GM12878 (cell line): ENCODE measurements at regions of chr2 and their contacts with region 1.

Region 1: DNA sequence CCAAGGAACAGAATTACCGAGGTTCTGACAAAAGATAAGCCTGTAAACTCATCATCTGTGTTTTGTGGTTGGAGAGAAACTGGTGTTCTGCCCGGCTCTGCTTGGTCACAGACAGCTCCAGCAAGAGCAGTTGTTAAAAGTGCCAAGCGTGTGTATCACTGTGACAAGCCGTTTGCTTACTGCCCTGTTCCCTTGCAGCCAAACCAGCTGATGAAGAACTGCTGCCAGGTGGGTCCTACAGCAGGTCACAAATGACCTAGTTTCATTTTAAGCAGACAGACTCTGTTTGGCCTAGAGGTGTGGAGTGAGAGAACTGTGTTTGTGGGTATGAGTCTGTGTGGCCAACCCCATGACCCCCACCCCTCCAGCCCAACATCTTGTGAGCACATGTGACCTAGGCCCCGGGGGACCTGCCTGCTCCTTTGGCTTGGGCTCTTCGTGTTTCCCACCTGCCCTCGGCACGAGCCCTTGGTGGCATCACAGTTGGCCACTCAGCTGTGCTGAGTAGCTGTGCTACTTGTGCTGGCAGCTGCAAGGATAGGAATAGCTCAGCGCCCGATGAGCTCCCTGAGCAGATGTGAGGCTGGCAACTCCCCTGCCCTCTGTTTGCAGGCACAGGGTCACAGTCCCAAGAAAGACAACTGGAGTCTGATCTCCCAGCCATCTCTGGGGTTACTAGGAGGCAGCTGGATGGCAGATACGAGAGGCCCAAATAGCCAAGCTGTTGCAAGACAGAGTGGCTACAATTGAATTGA is 9.7 kb downstream of the OXER1 start:
- DNase-seq: peak; percentile 76
- ATAC-seq: peak; percentile 80
- H3K4me3 ChIP-seq: no peak overlapping the region
- H3K27ac ChIP-seq: peak overlapping the region; percentile 24
- H3K4me1 ChIP-seq: peaks cover 52% of the 10 kb centered on the region
- H3K27me3 ChIP-seq: no peaks in the 10 kb centered on the region
- CTCF ChIP-seq: no peak
- EP300 ChIP-seq: peak; percentile 27 to 63; a peak in 1 of 4 replicates
- POLR2A ChIP-seq: no peak
- RAD21 ChIP-seq: no peak

Region 2: GRCh38 chr2:42494355-42495233 is 259.6 kb before region 1 on chr2:
- CTCF ChIA-PET with region 1: no interaction called
- POLR2A ChIA-PET with region 1: interaction called, 7 read pairs
- RAD21 ChIA-PET with region 1: no interaction called
- SMC1A ChIA-PET with region 1: no interaction called
- in situ Hi-C with region 1: no loop called
- intact Hi-C with region 1: loop called (anchors 10 kb)
- DNase-seq: peak; percentile 35
- ATAC-seq: peak; percentile 90
- H3K4me3 ChIP-seq: peak overlapping the region; percentile 76
- H3K27ac ChIP-seq: no peak overlapping the region
- H3K4me1 ChIP-seq: no peaks in the 10 kb centered on the region
- H3K27me3 ChIP-seq: peaks cover 3 to 13% of the 10 kb centered on the region in 2 experiments
- CTCF ChIP-seq: peak; percentile 83 to 90 (median 89)
- EP300 ChIP-seq: no peak
- POLR2A ChIP-seq: no peak
- RAD21 ChIP-seq: peak; percentile 91

Region 3: DNA sequence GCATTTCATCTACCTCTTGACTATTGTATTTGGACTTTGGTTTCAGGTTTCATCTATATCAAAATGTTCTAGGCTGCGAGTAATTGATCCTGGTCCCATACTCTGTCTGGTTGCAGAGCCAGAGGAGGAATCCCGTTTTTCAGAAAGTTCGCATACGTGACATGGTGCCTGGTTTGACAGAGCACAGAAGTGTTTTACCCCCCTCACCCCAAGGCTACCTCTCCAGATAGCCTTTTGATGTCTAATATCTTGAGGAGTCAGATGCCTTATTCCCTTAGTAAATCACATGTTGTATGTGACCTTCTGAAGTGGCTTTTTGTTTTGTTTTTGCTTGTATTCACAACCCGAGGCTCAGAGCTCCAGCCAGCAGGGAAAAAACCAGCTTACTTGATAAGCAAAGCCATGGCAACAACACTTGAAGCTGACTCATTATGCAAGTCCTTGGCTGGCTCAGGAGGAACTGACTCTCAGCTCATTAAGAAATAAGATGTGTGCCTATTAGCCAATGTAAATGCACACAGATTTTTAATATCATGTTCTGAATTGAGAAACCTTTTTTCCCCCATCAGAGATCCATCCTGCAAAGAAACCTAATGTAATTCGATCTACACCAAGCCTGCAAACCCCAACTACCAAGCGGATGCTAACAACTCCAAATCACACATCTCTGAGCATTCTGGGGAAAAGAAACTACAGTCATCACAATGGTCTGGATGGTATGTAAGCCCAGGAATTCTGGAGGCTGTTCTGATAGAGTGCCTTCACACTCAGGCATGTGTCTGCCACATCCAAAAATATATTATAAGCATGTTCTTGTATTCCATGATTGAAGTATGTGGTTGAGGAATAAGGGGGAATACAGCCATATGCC is 31.6 kb before region 1 on chr2:
- CTCF ChIA-PET with region 1: interaction called, 5 read pairs
- POLR2A ChIA-PET with region 1: interaction called, 18 read pairs
- RAD21 ChIA-PET with region 1: interaction called, 17 read pairs
- SMC1A ChIA-PET with region 1: interaction called, 23 read pairs
- in situ Hi-C with region 1: no loop called
- intact Hi-C with region 1: loop called (anchors 1 kb)
- DNase-seq: peak; percentile 91
- ATAC-seq: peak; percentile 98
- H3K4me3 ChIP-seq: peak overlapping the region; percentile 10; the same call in 1 of the 2 replicates
- H3K27ac ChIP-seq: peak overlapping the region; percentile 86
- H3K4me1 ChIP-seq: peaks cover 19% of the 10 kb centered on the region
- H3K27me3 ChIP-seq: no peaks in the 10 kb centered on the region
- CTCF ChIP-seq: no peak
- EP300 ChIP-seq: peak; percentile 97
- POLR2A ChIP-seq: no peak
- RAD21 ChIP-seq: 0 out of 2 replicates have a peak, but pooled peaks have one; percentile 23

Region 4: GRCh38 chr2:42741140-42741539 is 13.1 kb before region 1 on chr2:
- CTCF ChIA-PET with region 1: interaction called, 4 read pairs
- POLR2A ChIA-PET with region 1: interaction called, 3 read pairs
- RAD21 ChIA-PET with region 1: interaction called, 3 read pairs
- SMC1A ChIA-PET with region 1: interaction called, 14 read pairs
- in situ Hi-C with region 1: no loop called
- intact Hi-C with region 1: no loop called
- DNase-seq: no peak
- ATAC-seq: no peak
- H3K4me3 ChIP-seq: no peak overlapping the region
- H3K27ac ChIP-seq: no peak overlapping the region
- H3K4me1 ChIP-seq: no peaks in the 10 kb centered on the region
- H3K27me3 ChIP-seq: no peaks in the 10 kb centered on the region
- CTCF ChIP-seq: no peak
- EP300 ChIP-seq: no peak
- POLR2A ChIP-seq: no peak
- RAD21 ChIP-seq: no peak

Region 5: GRCh38 chr2:42775186-42775585 is 21.0 kb after region 1 on chr2:
- CTCF ChIA-PET with region 1: interaction called, 6 read pairs
- POLR2A ChIA-PET with region 1: interaction called, 8 read pairs
- RAD21 ChIA-PET with region 1: interaction called, 6 read pairs
- SMC1A ChIA-PET with region 1: interaction called, 18 read pairs
- in situ Hi-C with region 1: no loop called
- intact Hi-C with region 1: no loop called
- DNase-seq: no peak
- ATAC-seq: peak; percentile 51
- H3K4me3 ChIP-seq: peak overlapping the region; percentile 13; the same call in 1 of the 2 replicates
- H3K27ac ChIP-seq: peak overlapping the region; percentile 63
- H3K4me1 ChIP-seq: peaks cover 5% of the 10 kb centered on the region
- H3K27me3 ChIP-seq: no peaks in the 10 kb centered on the region
- CTCF ChIP-seq: no peak
- EP300 ChIP-seq: no peak
- POLR2A ChIP-seq: no peak
- RAD21 ChIP-seq: no peak

Region 6: GRCh38 chr2:43387092-43388062 is 633.2 kb after region 1 on chr2:
- CTCF ChIA-PET with region 1: no interaction called
- POLR2A ChIA-PET with region 1: no interaction called
- RAD21 ChIA-PET with region 1: no interaction called
- SMC1A ChIA-PET with region 1: no interaction called
- in situ Hi-C with region 1: no loop called
- intact Hi-C with region 1: no loop called
- DNase-seq: peak; percentile 86
- ATAC-seq: peak; percentile 84
- H3K4me3 ChIP-seq: peak overlapping the region; percentile 56
- H3K27ac ChIP-seq: peak overlapping the region; percentile 99
- H3K4me1 ChIP-seq: peaks cover 53% of the 10 kb centered on the region
- H3K27me3 ChIP-seq: no peaks in the 10 kb centered on the region
- CTCF ChIP-seq: no peak
- EP300 ChIP-seq: peak; percentile 81 to 92; a peak in 3 of 4 replicates
- POLR2A ChIP-seq: no peak
- RAD21 ChIP-seq: no peak